ENCODE measurements at regions of chr5 and their contacts with region 1.

Region 1: GRCh38 chr5:19608444-19609002 is 379.5 kb downstream of the CDH18 start:
- DNase-seq: no peak
- H3K4me3 ChIP-seq: no peak overlapping the region
- H3K27ac ChIP-seq: no peak overlapping the region
- H3K27me3 ChIP-seq: no peaks in the 10 kb centered on the region
- CTCF ChIP-seq: peak in 46 of 56 donors; percentile 10 to 62 (median 36)

Region 2: DNA sequence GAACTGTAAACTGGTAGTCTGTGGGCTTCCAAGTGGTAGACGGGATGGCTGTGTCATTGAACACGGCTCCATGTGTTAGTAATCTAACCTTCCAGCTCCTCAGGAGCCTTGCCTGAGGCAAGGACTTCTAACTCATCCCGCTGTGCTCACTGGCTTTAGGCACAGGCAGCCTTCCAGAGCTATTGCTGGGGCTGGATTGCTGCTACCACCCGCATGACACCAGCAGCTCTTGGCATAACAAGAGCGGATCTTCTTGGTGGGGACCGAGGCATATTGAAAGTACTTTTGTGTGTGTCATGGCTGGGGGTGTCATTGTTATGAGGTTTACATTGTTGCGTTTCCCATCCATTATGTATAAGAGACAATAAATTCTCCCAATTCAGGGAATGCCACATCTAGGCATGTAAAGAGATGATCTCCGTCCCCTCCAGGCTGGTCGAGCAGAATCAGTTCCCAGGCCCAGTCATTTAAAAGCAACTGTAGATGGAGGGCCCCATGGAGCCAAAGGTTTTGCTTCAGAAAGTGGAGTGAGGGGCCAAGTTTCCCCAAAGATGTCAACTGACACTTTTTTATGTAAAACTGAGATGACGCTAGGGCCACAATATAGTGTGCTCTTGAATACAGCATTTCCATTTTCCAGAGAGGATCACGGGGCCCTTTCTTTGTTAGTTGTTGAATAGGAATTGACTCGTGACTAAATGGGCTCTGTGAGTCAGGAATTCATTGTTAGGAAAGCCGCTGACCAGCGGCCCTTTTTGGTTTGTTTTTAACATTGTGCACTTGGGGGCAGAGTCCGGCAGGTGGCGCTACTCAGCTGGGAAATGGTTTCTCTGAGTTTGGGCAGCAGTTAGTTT is 1214.7 kb before region 1 on chr5:
- intact Hi-C with region 1: loop called in 1 of 2 experiments (anchors 10 kb)
- DNase-seq: peak; percentile 56 to 79 (median 70)
- H3K4me3 ChIP-seq: peak overlapping the region in 9 of 59 donors; percentile 5 to 51 (median 30)
- H3K27ac ChIP-seq: peak overlapping the region in 11 of 59 donors; percentile 3 to 64 (median 39)
- H3K27me3 ChIP-seq: peaks cover 0 to 3% (median 0%) of the 10 kb centered on the region in 45 donors
- CTCF ChIP-seq: peak; percentile 73 to 95 (median 89)

Region 3: DNA sequence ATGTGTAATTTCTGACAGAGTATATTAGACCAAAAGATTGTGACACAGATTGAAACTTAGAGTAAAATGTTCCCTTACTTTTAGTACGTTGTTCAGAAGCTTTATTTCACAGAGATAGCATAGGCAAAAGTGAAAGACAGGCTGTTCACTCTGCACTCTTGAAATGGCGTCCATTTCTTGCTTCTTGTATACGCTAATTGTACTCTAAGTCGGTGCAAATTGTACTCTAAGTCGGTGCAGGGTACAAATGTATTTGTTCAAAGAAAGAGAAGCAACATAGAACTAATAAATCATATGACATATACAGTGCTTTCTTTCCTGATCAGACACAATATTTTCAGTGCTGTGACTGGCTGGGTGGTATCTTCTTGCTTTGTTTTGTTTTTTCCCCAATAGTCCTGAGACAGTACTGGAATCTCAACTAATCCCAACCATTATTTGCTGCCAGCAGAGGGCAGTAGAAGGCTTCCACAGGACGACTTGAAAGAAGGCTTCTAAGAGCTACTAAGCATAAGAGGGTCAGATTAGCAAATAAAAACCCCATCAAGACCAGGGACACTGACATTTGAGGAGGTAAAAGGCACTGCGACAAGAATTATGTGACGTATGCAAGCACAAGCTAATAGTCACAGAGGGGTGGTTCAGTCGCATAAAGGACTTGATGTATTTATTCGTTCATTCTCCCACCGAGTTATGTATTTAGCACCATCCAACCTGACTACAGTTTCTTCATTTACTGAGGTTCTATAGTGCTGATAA is 1142.5 kb before region 1 on chr5:
- intact Hi-C with region 1: loop called in 1 of 2 experiments (anchors 10 kb)
- DNase-seq: peak; percentile 28 to 81 (median 50)
- H3K4me3 ChIP-seq: peak overlapping the region in 36 of 59 donors; percentile 1 to 58 (median 25)
- H3K27ac ChIP-seq: peak overlapping the region in 2 of 59 donors; percentile 4 to 17
- H3K27me3 ChIP-seq: no peaks in the 10 kb centered on the region
- CTCF ChIP-seq: peak; percentile 30 to 88 (median 74)

Region 4: GRCh38 chr5:18975624-18976023 is 632.9 kb before region 1 on chr5:
- intact Hi-C with region 1: no loop called
- DNase-seq: no peak
- H3K4me3 ChIP-seq: no peak overlapping the region
- H3K27ac ChIP-seq: no peak overlapping the region
- H3K27me3 ChIP-seq: no peaks in the 10 kb centered on the region
- CTCF ChIP-seq: no peak